HCT116 (cell line): ENCODE measurements at regions of chrX and their contacts with region 1.

Region 1: DNA sequence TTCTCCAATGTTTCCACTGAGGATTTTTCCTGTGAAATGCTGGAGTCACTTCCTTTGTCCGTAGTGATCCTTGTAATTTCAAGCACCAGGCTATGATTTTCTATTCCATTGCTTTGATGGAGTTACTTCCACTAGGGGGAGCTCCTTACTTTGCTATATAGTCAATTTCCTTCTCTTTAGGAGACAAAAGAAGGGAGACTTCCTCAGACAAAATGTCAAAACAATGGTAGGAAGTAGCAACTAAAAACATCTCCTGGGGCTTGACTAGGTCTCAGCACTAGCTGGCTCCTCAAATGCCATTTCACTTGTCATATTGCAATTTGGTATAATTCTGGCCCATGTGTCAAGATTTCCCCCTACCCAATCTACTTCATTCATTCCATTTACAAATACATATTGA is 24.1 kb downstream of the ZCCHC12 start:
- DNase-seq: peak; percentile 38
- ATAC-seq: peak; percentile 65; the same call in 1 of the 2 replicates
- H3K4me3 ChIP-seq: no peak overlapping the region
- H3K27ac ChIP-seq: no peak overlapping the region
- H3K4me1 ChIP-seq: no peaks in the 10 kb centered on the region
- H3K27me3 ChIP-seq: no peaks in the 10 kb centered on the region
- CTCF ChIP-seq: peak; percentile 44 to 64 (median 58); a peak in 5 of 6 replicates
- POLR2A ChIP-seq: no peak
- RAD21 ChIP-seq: peak; percentile 77

Region 2: GRCh38 chrX:119004920-119005524 is 157.3 kb after region 1 on chrX:
- CTCF ChIA-PET with region 1: interaction called, 8 read pairs
- POLR2A ChIA-PET with region 1: no interaction called
- RAD21 ChIA-PET with region 1: no interaction called
- intact Hi-C with region 1: loop called (anchors 5 kb)
- DNase-seq: no peak
- ATAC-seq: peak; percentile 89
- H3K4me3 ChIP-seq: no peak overlapping the region
- H3K27ac ChIP-seq: no peak overlapping the region
- H3K4me1 ChIP-seq: no peaks in the 10 kb centered on the region
- H3K27me3 ChIP-seq: no peaks in the 10 kb centered on the region
- CTCF ChIP-seq: peak; percentile 44 to 86 (median 68); a peak in 5 of 6 replicates
- POLR2A ChIP-seq: no peak
- RAD21 ChIP-seq: peak; percentile 46; the same call in 1 of the 2 replicates

Region 3: DNA sequence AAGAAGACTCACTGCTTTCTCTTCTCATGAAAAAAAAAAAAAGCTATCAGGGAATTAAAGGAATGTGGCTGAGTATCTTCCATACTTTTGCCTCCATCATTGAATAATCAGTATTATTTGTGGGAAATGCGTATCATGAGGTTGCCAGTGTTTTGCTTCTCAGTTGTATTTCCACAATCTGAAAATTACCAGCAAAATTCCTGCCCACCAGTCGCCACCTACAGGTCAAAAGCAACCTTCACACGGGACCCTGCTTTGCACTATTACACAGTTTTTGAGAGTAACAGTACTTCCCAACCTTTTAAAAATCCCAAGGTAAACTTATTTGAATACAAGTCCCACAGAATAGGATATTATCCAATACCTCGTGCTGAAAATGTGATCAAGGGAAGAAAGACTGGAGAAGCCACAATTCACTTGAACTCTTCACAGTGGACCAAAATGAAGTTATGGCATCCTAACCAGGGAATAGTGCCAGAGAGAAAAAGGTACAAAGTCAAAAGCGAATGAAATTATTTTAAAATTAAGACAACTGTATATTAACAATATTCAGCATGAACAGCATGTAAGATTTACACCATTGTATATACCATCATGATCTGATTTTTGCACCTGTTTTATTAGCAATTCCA is 418.8 kb after region 1 on chrX:
- CTCF ChIA-PET with region 1: no interaction called
- POLR2A ChIA-PET with region 1: no interaction called
- RAD21 ChIA-PET with region 1: no interaction called
- intact Hi-C with region 1: loop called (anchors 5 kb)
- DNase-seq: peak; percentile 6
- ATAC-seq: peak; percentile 70
- H3K4me3 ChIP-seq: no peak overlapping the region
- H3K27ac ChIP-seq: no peak overlapping the region
- H3K4me1 ChIP-seq: no peaks in the 10 kb centered on the region
- H3K27me3 ChIP-seq: no peaks in the 10 kb centered on the region
- CTCF ChIP-seq: peak; percentile 25 to 70 (median 65); a peak in 5 of 6 replicates
- POLR2A ChIP-seq: no peak
- RAD21 ChIP-seq: peak; percentile 51